Dorsolateral prefrontal cortex (tissue), 120 donors: ENCODE measurements at regions of chr14 and their contacts with region 1.

Region 1: GRCh38 chr14:68788996-68789820 is 3.7 kb downstream of the ZFP36L1 start:
- DNase-seq: peak; percentile 35 to 82 (median 76)
- H3K4me3 ChIP-seq: peak overlapping the region; percentile 49 to 83 (median 66)
- H3K27ac ChIP-seq: peak overlapping the region in 58 of 59 donors; percentile 39 to 99 (median 91)
- H3K27me3 ChIP-seq: peaks cover 0 to 47% (median 22%) of the 10 kb centered on the region in 45 donors
- CTCF ChIP-seq: peak; percentile 48 to 87 (median 76)

Region 2: GRCh38 chr14:68359837-68360552 is 429.2 kb before region 1 on chr14:
- intact Hi-C with region 1: loop called in 1 of 2 experiments (anchors 10 kb)
- DNase-seq: no peak
- H3K4me3 ChIP-seq: no peak overlapping the region
- H3K27ac ChIP-seq: peak overlapping the region in 58 of 59 donors; percentile 23 to 91 (median 71)
- H3K27me3 ChIP-seq: no peaks in the 10 kb centered on the region
- CTCF ChIP-seq: no peak

Region 3: GRCh38 chr14:68692916-68693771 is 96.1 kb before region 1 on chr14:
- intact Hi-C with region 1: loop called in 1 of 2 experiments (anchors 5 kb)
- DNase-seq: no peak
- H3K4me3 ChIP-seq: no peak overlapping the region
- H3K27ac ChIP-seq: no peak overlapping the region
- H3K27me3 ChIP-seq: peaks cover 0 to 2% (median 0%) of the 10 kb centered on the region in 45 donors
- CTCF ChIP-seq: no peak

Region 4: GRCh38 chr14:68843471-68844209 is 54.4 kb after region 1 on chr14:
- intact Hi-C with region 1: no loop called
- DNase-seq: peak; percentile 68 to 86 (median 74)
- H3K4me3 ChIP-seq: peak overlapping the region in 52 of 59 donors; percentile 13 to 63 (median 44)
- H3K27ac ChIP-seq: no peak overlapping the region
- H3K27me3 ChIP-seq: peaks cover 0 to 5% (median 0%) of the 10 kb centered on the region in 45 donors
- CTCF ChIP-seq: peak; percentile 58 to 94 (median 87)